Endothelial cell of umbilical vein (primary cell): ENCODE measurements at regions of chr14 and their contacts with region 1.

Region 1: GRCh38 chr14:100955201-100955600 is 51.7 kb upstream of the RTL1 start:
- DNase-seq: peak; percentile 50
- H3K4me3 ChIP-seq: no peak overlapping the region
- H3K27ac ChIP-seq: no peak overlapping the region
- H3K4me1 ChIP-seq: peaks cover 7% of the 10 kb centered on the region
- H3K27me3 ChIP-seq: no peaks in the 10 kb centered on the region
- CTCF ChIP-seq: no peak
- POLR2A ChIP-seq: no peak

Region 2: GRCh38 chr14:100967930-100968329 is 12.7 kb after region 1 on chr14:
- CTCF ChIA-PET with region 1: no interaction called
- POLR2A ChIA-PET with region 1: no interaction called
- dilution Hi-C with region 1: no loop called
- intact Hi-C with region 1: loop called (anchors 2 kb)
- DNase-seq: no peak
- H3K4me3 ChIP-seq: no peak overlapping the region
- H3K27ac ChIP-seq: no peak overlapping the region
- H3K4me1 ChIP-seq: no peaks in the 10 kb centered on the region
- H3K27me3 ChIP-seq: no peaks in the 10 kb centered on the region
- CTCF ChIP-seq: no peak
- POLR2A ChIP-seq: no peak

Region 3: GRCh38 chr14:101004954-101005353 is 49.8 kb after region 1 on chr14:
- CTCF ChIA-PET with region 1: no interaction called
- POLR2A ChIA-PET with region 1: no interaction called
- dilution Hi-C with region 1: no loop called
- intact Hi-C with region 1: no loop called
- DNase-seq: no peak
- H3K4me3 ChIP-seq: no peak overlapping the region
- H3K27ac ChIP-seq: no peak overlapping the region
- H3K4me1 ChIP-seq: no peaks in the 10 kb centered on the region
- H3K27me3 ChIP-seq: no peaks in the 10 kb centered on the region
- CTCF ChIP-seq: no peak
- POLR2A ChIP-seq: no peak